ENCODE measurements at regions of chr10 and their contacts with region 1.

Region 1: GRCh38 chr10:37713642-37714041 is 143.8 kb downstream of the ZNF248 start:
- DNase-seq: no peak
- ATAC-seq: no peak
- H3K4me3 ChIP-seq: no peak overlapping the region
- H3K4me3 Mint-ChIP-seq: no peak overlapping the region
- H3K27ac ChIP-seq: no peak overlapping the region
- H3K27ac Mint-ChIP-seq: no peak overlapping the region
- H3K4me1 ChIP-seq: no peaks in the 10 kb centered on the region
- H3K4me1 Mint-ChIP-seq: no peaks in the 10 kb centered on the region
- H3K27me3 ChIP-seq: no peaks in the 10 kb centered on the region
- H3K27me3 Mint-ChIP-seq: no peaks in the 10 kb centered on the region
- CTCF ChIP-seq: no peak

Region 2: DNA sequence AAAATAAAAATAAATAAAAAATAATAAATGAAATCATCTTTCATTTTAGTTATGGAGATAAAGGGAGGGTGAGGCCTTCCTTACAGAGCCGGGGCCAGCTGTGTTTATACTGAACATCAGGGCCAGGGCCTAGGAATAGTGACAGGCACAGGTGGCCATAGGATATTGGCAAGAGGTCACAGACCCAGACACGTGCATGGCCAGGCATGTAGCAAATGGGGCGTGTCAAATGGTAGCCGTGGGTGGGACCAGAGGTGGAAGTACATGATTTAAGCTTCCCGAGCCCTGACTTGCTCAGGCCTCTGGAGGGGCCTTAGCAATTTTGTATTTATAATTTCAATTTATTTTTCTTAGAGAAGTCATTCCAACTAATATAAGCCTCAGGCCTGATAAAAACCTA is 235.2 kb before region 1 on chr10:
- CTCF ChIA-PET with region 1: no interaction called
- POLR2A ChIA-PET with region 1: no interaction called
- intact Hi-C with region 1: no loop called
- DNase-seq: no peak
- ATAC-seq: no peak
- H3K4me3 ChIP-seq: no peak overlapping the region
- H3K4me3 Mint-ChIP-seq: no peak overlapping the region
- H3K27ac ChIP-seq: no peak overlapping the region
- H3K27ac Mint-ChIP-seq: no peak overlapping the region
- H3K4me1 ChIP-seq: no peaks in the 10 kb centered on the region
- H3K4me1 Mint-ChIP-seq: no peaks in the 10 kb centered on the region
- H3K27me3 ChIP-seq: no peaks in the 10 kb centered on the region
- H3K27me3 Mint-ChIP-seq: no peaks in the 10 kb centered on the region
- CTCF ChIP-seq: no peak

Region 3: DNA sequence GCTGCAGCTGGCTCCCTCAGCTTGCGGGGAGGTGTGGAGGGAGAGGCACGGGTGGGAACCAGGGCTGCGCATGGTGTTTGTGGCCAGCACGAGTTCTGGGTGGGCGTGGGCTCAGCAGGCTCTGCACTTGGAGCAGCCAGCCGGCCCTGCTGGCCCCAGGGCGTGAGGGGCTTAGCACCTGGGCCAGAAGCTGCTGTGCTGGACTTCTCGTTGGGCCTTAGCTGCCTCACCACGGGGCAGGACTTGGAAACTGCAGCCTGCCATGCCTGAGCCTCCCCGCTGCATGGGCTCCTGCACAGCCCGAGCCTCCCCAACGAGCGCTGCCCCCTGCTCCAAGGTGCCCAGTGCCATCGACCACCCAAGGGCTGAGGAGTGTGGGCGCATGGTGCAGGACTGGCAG is 23.7 kb after region 1 on chr10:
- CTCF ChIA-PET with region 1: no interaction called
- POLR2A ChIA-PET with region 1: no interaction called
- intact Hi-C with region 1: loop called in 1 of 2 experiments (anchors 1 kb)
- DNase-seq: no peak
- ATAC-seq: no peak
- H3K4me3 ChIP-seq: no peak overlapping the region
- H3K4me3 Mint-ChIP-seq: no peak overlapping the region
- H3K27ac ChIP-seq: no peak overlapping the region
- H3K27ac Mint-ChIP-seq: no peak overlapping the region
- H3K4me1 ChIP-seq: no peaks in the 10 kb centered on the region
- H3K4me1 Mint-ChIP-seq: no peaks in the 10 kb centered on the region
- H3K27me3 ChIP-seq: no peaks in the 10 kb centered on the region
- H3K27me3 Mint-ChIP-seq: no peaks in the 10 kb centered on the region
- CTCF ChIP-seq: no peak

Measured in CD4-positive, alpha-beta T cell (primary cell).